Transverse colon (tissue), 4 donors: ENCODE measurements at regions of chr12 and their contacts with region 1.

Region 1: DNA sequence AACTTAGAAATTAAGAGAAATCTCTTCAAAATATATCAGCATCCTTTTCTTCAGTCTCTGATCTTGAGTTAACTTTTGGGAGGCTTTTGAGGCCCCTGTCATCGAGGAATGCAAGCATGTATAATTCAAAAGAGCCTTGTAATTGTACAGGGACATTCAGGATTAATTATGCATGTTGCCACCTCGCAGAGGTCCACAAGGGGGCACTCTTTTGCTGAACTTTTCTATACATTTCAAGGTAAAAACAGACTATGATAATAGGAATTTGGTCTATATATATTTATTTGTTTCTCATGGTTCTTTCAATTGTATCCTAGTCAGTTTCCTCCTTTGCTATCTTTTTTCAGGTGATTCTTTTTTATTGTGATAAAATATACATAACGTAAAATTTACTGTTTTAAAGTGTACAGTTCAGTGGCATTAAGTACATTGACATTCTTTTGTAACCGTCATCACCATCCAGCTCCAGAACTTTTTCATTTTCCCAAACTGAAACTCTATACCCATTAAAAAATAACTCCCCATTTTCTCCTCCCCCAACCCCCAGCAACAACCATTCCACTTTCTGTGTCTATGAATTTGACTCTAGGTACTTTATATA is 47.0 kb upstream of the SLC2A13 start:
- DNase-seq: peak; percentile 59
- H3K4me3 ChIP-seq: no peak overlapping the region
- H3K27ac ChIP-seq: no peak overlapping the region
- H3K4me1 ChIP-seq: no peaks in the 10 kb centered on the region
- H3K27me3 ChIP-seq: no peaks in the 10 kb centered on the region
- CTCF ChIP-seq: peak; percentile 58 to 87 (median 85)
- EP300 ChIP-seq: no peak
- POLR2A ChIP-seq: no peak

Region 2: DNA sequence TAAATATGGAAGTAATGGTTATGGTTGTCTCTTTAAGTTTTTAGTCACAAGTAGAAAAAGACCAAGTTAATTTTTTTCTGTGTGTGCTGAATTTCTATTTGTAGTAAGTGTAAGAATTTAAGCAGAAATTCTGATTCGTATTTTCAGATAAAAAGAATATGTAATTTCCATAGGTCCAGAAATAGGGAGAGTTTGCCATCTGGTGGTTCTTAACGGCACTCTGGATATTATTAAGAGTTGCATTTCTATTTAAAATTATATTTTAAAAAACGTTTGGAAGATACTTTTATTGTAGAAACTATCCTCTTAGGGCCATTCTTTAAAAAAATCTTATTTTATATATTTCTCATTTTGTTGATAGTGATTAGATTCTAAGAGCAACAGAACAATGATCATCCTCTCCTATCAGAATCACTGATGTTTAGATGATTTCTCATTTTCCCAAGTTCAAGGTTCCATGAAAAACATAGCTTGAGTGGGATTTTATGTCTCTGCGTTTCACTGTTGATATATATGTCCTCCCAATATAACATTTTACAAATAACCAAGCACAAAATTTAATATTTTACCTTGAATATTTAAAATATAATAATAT is 160.2 kb after region 1 on chr12:
- in situ Hi-C with region 1: loop called in 2 of 4 experiments (anchors 10 to 25 kb)
- intact Hi-C with region 1: loop called (anchors 10 kb)
- DNase-seq: no peak
- H3K4me3 ChIP-seq: no peak overlapping the region
- H3K27ac ChIP-seq: no peak overlapping the region
- H3K4me1 ChIP-seq: no peaks in the 10 kb centered on the region
- H3K27me3 ChIP-seq: no peaks in the 10 kb centered on the region
- CTCF ChIP-seq: peak in 3 of 5 experiments; percentile 17 to 26 (median 22)
- EP300 ChIP-seq: no peak
- POLR2A ChIP-seq: no peak